PC-9 (cell line): ENCODE measurements at regions of chr6 and their contacts with region 1.

Region 1: DNA sequence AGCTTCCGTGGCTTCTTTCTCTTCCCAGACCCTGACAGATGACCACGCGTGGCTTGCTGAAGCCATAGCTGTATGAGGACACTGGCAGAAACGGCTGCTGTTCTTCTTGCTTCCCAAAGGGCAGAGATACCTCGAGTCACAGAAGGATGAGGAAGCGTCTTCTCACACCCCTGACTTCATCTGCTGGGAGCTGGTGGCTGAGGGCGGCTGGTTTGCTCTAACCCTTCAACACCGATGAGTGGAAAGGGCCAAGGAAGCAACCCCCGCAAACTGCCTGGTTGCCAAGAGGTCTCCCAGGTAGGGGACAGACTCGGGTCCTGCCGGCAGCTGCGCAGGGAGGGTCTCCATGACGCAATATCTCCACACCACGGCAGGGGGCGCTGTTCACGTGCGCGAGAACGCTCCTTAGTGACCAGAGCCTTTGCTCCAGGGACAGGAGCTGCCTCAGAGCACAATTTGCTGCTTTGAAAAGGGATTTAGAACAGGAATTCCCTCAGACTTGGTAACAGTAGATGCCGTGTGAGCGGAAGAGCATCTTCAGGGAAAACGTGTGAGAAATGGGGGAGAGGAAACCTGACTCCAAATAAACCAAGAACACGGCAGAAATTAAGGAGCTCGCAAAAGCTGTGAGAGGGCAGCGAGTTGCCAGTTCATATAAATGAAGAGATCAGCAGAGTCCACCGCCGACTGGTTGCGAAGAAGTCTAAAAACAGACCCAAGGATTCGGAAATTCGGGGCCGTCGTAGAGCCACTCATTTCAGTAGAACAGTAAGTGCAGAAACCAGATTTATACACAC is 80.2 kb downstream of the ERMARD start:
- DNase-seq: peak in 1 of 2 experiments; percentile 37
- H3K4me3 ChIP-seq: no peak overlapping the region
- H3K27ac ChIP-seq: no peak overlapping the region
- H3K4me1 ChIP-seq: no peaks in the 10 kb centered on the region
- H3K27me3 ChIP-seq: peaks cover 93% of the 10 kb centered on the region
- CTCF ChIP-seq: peak; percentile 83

Region 2: DNA sequence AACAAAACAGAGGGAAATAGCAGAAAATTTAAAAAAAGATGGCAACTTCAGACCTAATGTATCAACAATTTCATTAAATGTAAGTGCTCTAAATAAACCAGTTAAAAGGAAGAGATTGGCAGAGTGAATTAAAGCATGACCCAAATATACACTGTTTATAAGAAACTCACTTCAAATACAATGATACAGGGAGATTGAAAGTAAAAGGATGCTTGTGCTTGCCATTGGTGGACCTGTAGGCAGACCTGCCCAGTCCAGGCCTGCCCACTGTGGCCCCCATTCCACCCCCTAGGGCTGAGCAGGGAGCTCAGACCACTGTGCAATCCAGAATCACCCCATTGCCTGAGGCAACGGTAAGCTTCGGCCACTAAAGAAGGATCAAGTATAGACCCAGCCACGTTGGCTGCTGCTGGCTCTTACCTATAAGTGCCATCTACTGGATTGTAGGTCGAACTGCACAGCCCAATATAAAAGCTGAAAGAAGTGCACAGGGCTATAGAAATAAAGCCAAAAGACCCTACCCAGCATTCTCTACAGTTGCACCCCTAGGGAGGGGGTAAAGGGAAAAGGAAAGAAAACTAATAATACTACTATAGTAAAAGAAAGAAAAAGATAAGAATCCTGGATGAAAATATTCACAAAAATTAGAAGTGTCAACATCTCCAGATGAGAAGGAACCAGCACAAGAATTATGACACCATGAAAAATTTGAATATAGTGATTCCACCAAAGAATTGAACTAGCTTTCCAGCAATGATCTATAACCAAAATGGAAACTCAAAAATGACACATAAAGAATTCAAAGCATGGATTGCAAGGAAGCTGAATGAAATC is 685.4 kb after region 1 on chr6:
- CTCF ChIA-PET with region 1: interaction called, 4 read pairs
- POLR2A ChIA-PET with region 1: no interaction called
- intact Hi-C with region 1: loop called (anchors 1 kb)
- DNase-seq: peak in 1 of 2 experiments; percentile 8
- H3K4me3 ChIP-seq: no peak overlapping the region
- H3K27ac ChIP-seq: no peak overlapping the region
- H3K4me1 ChIP-seq: no peaks in the 10 kb centered on the region
- H3K27me3 ChIP-seq: peaks cover 68% of the 10 kb centered on the region
- CTCF ChIP-seq: peak; percentile 80